Mammary epithelial cell (primary cell): ENCODE measurements at regions of chr11 and their contacts with region 1.

Region 1: DNA sequence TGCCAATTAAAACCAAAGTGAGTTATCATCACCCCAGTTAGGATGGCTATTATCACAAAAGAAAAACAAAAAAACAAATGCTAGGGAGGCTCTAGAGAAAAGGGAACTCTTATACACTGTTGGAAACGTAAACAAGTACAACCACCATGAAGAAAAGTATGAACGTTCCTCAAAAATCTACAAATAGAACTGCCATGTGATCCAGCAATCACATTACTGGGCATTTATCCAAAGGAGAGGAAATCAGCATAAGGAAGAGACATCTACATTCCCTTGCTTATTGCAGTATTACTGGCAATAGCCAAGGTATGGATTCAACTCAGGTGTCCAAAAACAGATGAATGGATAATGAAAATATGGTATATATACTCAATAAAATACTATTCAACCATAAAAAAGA is 1145.1 kb downstream of the LRRC4C start:
- DNase-seq: no peak
- H3K4me3 ChIP-seq: no peak overlapping the region
- H3K27ac ChIP-seq: no peak overlapping the region
- H3K4me1 ChIP-seq: no peaks in the 10 kb centered on the region
- H3K27me3 ChIP-seq: no peaks in the 10 kb centered on the region
- CTCF ChIP-seq: no peak

Region 2: GRCh38 chr11:40281052-40281580 is 33.2 kb before region 1 on chr11:
- CTCF ChIA-PET with region 1: no interaction called
- dilution Hi-C with region 1: no loop called
- in situ Hi-C with region 1: no loop called
- intact Hi-C with region 1: no loop called
- DNase-seq: no peak
- H3K4me3 ChIP-seq: no peak overlapping the region
- H3K27ac ChIP-seq: no peak overlapping the region
- H3K4me1 ChIP-seq: no peaks in the 10 kb centered on the region
- H3K27me3 ChIP-seq: no peaks in the 10 kb centered on the region
- CTCF ChIP-seq: no peak

Region 3: DNA sequence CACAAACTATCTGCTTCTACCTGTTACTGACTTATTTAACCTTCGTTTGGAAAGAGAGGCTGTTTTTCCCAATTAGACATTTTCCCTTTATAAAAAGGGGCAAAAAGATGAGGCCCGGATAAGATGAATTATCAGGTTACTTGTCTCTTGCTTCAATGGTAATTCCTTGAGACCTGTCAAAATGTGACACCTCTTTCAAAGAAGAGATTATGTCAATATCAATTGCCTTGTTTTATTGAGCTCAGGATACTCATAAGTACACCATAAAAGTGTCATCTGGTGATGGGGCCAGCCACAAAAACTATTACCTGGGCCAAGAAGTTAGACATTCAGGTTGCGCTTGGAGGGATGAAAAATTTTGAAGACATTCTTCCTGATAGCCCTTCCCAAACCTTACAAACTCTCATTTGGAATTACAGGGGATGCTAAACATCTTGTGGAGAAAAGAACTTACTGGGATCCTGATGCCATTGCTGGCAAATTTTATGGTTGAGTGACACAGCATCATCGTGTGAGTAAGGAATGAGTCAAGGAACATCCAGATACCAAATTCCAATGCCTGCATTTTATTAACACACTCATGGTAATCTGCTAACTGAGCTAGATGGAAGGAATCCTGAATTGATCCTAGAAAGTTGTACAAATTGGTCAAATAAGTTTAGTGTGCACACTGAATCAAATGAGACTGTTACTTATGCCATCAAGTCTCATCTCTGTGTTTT is 73.9 kb after region 1 on chr11:
- CTCF ChIA-PET with region 1: no interaction called
- dilution Hi-C with region 1: no loop called
- in situ Hi-C with region 1: no loop called
- intact Hi-C with region 1: no loop called
- DNase-seq: no peak
- H3K4me3 ChIP-seq: no peak overlapping the region
- H3K27ac ChIP-seq: no peak overlapping the region
- H3K4me1 ChIP-seq: no peaks in the 10 kb centered on the region
- H3K27me3 ChIP-seq: no peaks in the 10 kb centered on the region
- CTCF ChIP-seq: no peak

Region 4: GRCh38 chr11:40722179-40722795 is 408.0 kb after region 1 on chr11:
- CTCF ChIA-PET with region 1: no interaction called
- dilution Hi-C with region 1: no loop called
- in situ Hi-C with region 1: loop called (anchors 10 to 25 kb)
- intact Hi-C with region 1: no loop called
- DNase-seq: peak; percentile 28
- H3K4me3 ChIP-seq: no peak overlapping the region
- H3K27ac ChIP-seq: no peak overlapping the region
- H3K4me1 ChIP-seq: no peaks in the 10 kb centered on the region
- H3K27me3 ChIP-seq: no peaks in the 10 kb centered on the region
- CTCF ChIP-seq: peak; percentile 82 to 83